CD8-positive, alpha-beta memory T cell (primary cell): ENCODE measurements at regions of chr5 and their contacts with region 1.

Region 1: GRCh38 chr5:172243302-172243701 is 40.3 kb downstream of the UBTD2 start:
- DNase-seq: no peak
- H3K4me3 ChIP-seq: no peak overlapping the region
- H3K4me3 Mint-ChIP-seq: no peak overlapping the region
- H3K27ac ChIP-seq: no peak overlapping the region
- H3K27ac Mint-ChIP-seq: no peak overlapping the region
- H3K4me1 ChIP-seq: peaks cover 7% of the 10 kb centered on the region
- H3K4me1 Mint-ChIP-seq: peaks cover 9 to 24% (median 18%) of the 10 kb centered on the region in 3 donors
- H3K27me3 ChIP-seq: no peaks in the 10 kb centered on the region
- H3K27me3 Mint-ChIP-seq: no peaks in the 10 kb centered on the region

Region 2: GRCh38 chr5:172274921-172275753 is 31.8 kb after region 1 on chr5:
- CTCF ChIA-PET with region 1: no interaction called
- POLR2A ChIA-PET with region 1: interaction called, 10 read pairs
- DNase-seq: peak in 4 of 5 donors; percentile 18 to 58 (median 24)
- H3K4me3 ChIP-seq: no peak overlapping the region
- H3K4me3 Mint-ChIP-seq: peak overlapping the region in 3 of 7 donors; percentile 1 to 29 (median 1)
- H3K27ac ChIP-seq: no peak overlapping the region
- H3K27ac Mint-ChIP-seq: peak overlapping the region in 4 of 8 donors; percentile 6 to 76 (median 36)
- H3K4me1 ChIP-seq: no peaks in the 10 kb centered on the region
- H3K4me1 Mint-ChIP-seq: peaks cover 13 to 29% (median 23%) of the 10 kb centered on the region in 3 donors
- H3K27me3 ChIP-seq: no peaks in the 10 kb centered on the region
- H3K27me3 Mint-ChIP-seq: no peaks in the 10 kb centered on the region